ENCODE measurements at regions of chr17 and their contacts with region 1.

Region 1: GRCh38 chr17:38351412-38352222 is at the start of gene SOCS7:
- DNase-seq: peak; percentile 87
- H3K4me3 ChIP-seq: peak within 1 kb of the TSS; percentile 72 to 78 (median 73)
- H3K27ac ChIP-seq: peak within 1 kb of the TSS; percentile 59
- H3K4me1 ChIP-seq: peaks cover 10% of the 10 kb centered on the region
- H3K27me3 ChIP-seq: no peaks in the 10 kb centered on the region
- CTCF ChIP-seq: no peak
- total RNA-seq, gene SOCS7: 16.2 to 23.2 TPM

Region 2: GRCh38 chr17:38403491-38403890 is 51.9 kb after region 1 on chr17:
- CTCF ChIA-PET with region 1: no interaction called
- dilution Hi-C with region 1: no loop called
- in situ Hi-C with region 1: no loop called
- intact Hi-C with region 1: loop called (anchors 1 kb)
- DNase-seq: no peak
- H3K4me3 ChIP-seq: no peak overlapping the region
- H3K27ac ChIP-seq: no peak overlapping the region
- H3K4me1 ChIP-seq: no peaks in the 10 kb centered on the region
- H3K27me3 ChIP-seq: no peaks in the 10 kb centered on the region
- CTCF ChIP-seq: no peak

Region 3: DNA sequence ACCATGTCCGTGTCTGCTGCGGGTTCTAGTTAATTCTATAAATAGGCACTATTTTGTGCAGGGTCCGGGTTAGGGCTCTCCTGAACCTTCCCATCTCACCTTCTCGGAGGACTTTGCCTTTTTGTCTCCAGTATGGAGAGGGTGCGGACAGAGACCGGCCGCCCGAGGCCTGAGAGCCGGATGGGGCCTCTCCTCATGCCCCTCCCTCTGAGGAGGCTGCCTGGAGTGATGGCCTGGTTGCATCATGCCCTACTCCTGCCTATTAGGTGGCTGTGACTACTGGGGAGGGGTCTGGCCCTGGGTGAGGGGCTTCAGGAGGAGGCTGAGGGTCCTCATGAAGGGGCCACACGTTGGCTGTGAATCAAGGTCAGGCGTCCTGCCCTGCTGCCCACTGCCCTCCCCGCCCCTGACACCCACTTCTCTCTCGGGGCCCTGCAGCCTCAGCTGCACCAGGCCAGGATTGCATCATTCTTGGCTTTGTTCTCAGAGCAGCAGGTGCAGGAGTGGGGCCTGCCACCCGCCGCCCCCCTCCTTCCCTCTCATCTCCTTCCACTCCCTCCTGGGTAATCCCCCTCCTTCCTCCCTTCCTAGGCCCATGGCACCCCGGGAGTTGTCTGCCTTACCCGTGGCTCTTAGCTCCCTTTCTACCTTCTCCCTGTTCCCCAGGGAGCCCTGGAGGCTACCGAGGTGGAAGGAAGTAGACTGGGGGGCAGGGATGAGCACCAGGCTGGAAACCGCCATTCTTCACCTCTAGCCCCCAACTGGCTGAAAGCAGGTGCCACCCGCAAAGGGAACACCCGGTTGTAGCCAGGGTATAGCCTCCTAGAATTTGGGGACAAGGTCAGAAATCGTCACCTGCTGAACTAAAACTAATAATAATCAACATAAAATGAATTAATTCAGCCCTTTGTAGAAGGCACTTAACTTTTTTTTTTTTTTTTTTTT is 63.9 kb after region 1 on chr17:
- CTCF ChIA-PET with region 1: interaction called, 23 read pairs
- dilution Hi-C with region 1: no loop called
- in situ Hi-C with region 1: loop called (anchors 5 kb)
- intact Hi-C with region 1: loop called (anchors 1 kb)
- DNase-seq: no peak
- H3K4me3 ChIP-seq: peak overlapping the region in 1 of 3 experiments; percentile 24
- H3K27ac ChIP-seq: no peak overlapping the region
- H3K4me1 ChIP-seq: peaks cover 8% of the 10 kb centered on the region
- H3K27me3 ChIP-seq: peaks cover 15% of the 10 kb centered on the region
- CTCF ChIP-seq: no peak

Region 4: DNA sequence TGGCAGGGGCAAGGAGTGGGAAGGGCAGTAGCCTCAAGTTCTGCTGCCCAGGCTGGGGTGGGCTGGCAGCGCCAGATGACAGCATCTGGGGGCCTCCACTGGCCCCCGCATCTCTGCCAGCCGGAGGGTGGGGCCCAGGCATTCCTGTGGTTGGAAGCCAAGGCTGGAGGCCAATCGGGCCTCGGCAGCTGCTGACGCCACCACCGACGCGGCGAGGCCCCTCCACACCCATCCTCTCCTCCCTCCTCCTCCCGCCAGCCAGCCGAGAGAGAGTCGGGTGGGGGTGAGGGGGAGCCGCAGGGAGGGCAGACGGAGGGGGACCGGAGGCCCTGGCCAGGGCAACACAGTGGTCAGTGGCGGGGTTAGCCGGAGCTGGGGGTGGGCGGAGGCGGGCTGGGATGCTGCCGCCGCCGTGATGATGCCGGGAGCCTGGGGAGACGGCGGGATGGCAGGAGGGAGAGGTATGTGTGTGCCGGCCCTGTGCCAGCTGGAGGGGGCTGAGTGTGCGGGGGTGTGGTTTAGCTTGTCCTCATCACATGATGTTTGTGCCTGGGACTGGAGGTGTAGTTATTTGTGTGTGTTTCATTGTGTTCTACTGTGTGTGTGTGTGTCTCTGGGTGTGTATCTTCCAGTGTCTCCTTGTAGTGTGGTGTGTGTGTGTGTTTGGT is 113.2 kb after region 1 on chr17:
- CTCF ChIA-PET with region 1: interaction called, 10 read pairs
- dilution Hi-C with region 1: no loop called
- in situ Hi-C with region 1: no loop called
- intact Hi-C with region 1: no loop called
- DNase-seq: peak; percentile 85
- H3K4me3 ChIP-seq: peak overlapping the region; percentile 41 to 56 (median 52)
- H3K27ac ChIP-seq: peak overlapping the region; percentile 96
- H3K4me1 ChIP-seq: peaks cover 29% of the 10 kb centered on the region
- H3K27me3 ChIP-seq: no peaks in the 10 kb centered on the region
- CTCF ChIP-seq: no peak

Region 5: GRCh38 chr17:38557836-38558727 is 206.5 kb after region 1 on chr17:
- CTCF ChIA-PET with region 1: interaction called, 3 read pairs
- dilution Hi-C with region 1: no loop called
- in situ Hi-C with region 1: no loop called
- intact Hi-C with region 1: loop called (anchors 10 kb)
- DNase-seq: peak; percentile 95
- H3K4me3 ChIP-seq: peak overlapping the region; percentile 41 to 53 (median 48)
- H3K27ac ChIP-seq: peak overlapping the region; percentile 8
- H3K4me1 ChIP-seq: peaks cover 58% of the 10 kb centered on the region
- H3K27me3 ChIP-seq: no peaks in the 10 kb centered on the region
- CTCF ChIP-seq: peak; percentile 87 to 98

Region 6: DNA sequence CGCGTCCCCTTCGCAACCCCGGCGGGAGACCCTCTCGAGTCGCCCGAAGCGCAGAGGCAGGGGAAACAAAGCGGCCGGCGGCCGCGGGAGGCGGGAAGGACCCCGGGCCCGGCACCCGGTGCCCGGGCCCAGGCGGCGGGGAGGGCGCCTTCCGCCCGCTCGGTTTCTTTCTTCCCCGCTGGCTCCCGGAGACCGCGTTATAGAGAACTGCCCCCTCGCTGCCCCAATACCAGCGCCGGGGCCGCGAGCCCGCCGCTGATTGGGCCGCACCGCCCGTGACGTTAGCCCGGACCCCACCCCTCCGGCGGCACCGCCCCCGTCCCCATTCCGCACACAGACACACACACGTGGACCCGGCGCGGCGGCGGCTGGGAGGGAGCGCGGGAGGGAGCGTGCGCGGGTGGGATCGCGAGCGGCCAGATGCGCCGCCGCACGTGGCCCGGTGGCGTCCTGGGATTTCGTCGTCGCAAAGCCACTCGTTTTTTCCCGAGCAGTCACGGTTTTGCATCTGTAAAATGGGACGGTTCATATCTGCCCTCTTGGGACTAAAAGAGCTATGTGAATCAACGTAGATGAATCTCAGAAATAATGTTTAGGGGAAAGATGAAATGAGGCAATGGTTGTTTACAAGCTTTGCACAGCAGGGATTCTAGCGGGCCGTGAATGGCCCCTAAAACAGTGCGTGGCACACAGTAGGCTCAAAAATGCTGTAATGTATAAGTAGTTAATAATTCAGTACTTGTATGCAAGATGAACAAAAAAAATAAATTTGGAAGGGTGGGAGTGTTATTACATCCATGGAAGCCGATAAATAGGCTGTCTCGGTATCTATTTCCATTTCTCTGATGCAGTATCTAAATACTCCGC is 323.4 kb after region 1 on chr17 and contains the start of gene EPOP:
- CTCF ChIA-PET with region 1: no interaction called
- dilution Hi-C with region 1: no loop called
- in situ Hi-C with region 1: loop called in 1 of 2 experiments (anchors 25 kb)
- intact Hi-C with region 1: no loop called
- DNase-seq: peak; percentile 78
- H3K4me3 ChIP-seq: peak within 1 kb of the TSS; percentile 49 to 62 (median 53)
- H3K27ac ChIP-seq: peak within 1 kb of the TSS; percentile 19
- H3K4me1 ChIP-seq: peaks cover 17% of the 10 kb centered on the region
- H3K27me3 ChIP-seq: peaks cover 5% of the 10 kb centered on the region
- CTCF ChIP-seq: no peak
- total RNA-seq, gene EPOP: 2.8 to 3.2 TPM